ENCODE measurements at regions of chr20 and their contacts with region 1.

Region 1: GRCh38 chr20:10434832-10435812 is at the start of gene SLX4IP:
- DNase-seq: peak; percentile 89
- H3K4me3 Mint-ChIP-seq: peak within 1 kb of the TSS; percentile 90
- H3K27ac Mint-ChIP-seq: peak within 1 kb of the TSS; percentile 96
- H3K4me1 Mint-ChIP-seq: peaks cover 50% of the 10 kb centered on the region
- H3K27me3 Mint-ChIP-seq: no peaks in the 10 kb centered on the region
- total RNA-seq, gene SLX4IP: 5.5 to 6.3 TPM

Region 2: GRCh38 chr20:10034717-10035571 is 400.2 kb before region 1 on chr20 and contains the start of gene ANKEF1:
- CTCF ChIA-PET with region 1: no interaction called
- POLR2A ChIA-PET with region 1: no interaction called
- intact Hi-C with region 1: loop called (anchors 5 kb)
- DNase-seq: peak; percentile 75
- H3K4me3 Mint-ChIP-seq: peak within 1 kb of the TSS; percentile 61
- H3K27ac Mint-ChIP-seq: no peak within 1 kb of the TSS
- H3K4me1 Mint-ChIP-seq: peaks cover 3% of the 10 kb centered on the region
- H3K27me3 Mint-ChIP-seq: peaks cover 6% of the 10 kb centered on the region
- total RNA-seq, gene ANKEF1: 1.3 TPM

Region 3: GRCh38 chr20:10357974-10358373 is 77.1 kb before region 1 on chr20:
- CTCF ChIA-PET with region 1: interaction called, 3 read pairs
- POLR2A ChIA-PET with region 1: interaction called, 16 read pairs
- intact Hi-C with region 1: no loop called
- DNase-seq: no peak
- H3K4me3 Mint-ChIP-seq: no peak overlapping the region
- H3K27ac Mint-ChIP-seq: no peak overlapping the region
- H3K4me1 Mint-ChIP-seq: peaks cover 5% of the 10 kb centered on the region
- H3K27me3 Mint-ChIP-seq: no peaks in the 10 kb centered on the region

Region 4: GRCh38 chr20:10511509-10512251 is 76.6 kb after region 1 on chr20:
- CTCF ChIA-PET with region 1: no interaction called
- POLR2A ChIA-PET with region 1: no interaction called
- intact Hi-C with region 1: loop called (anchors 1 kb)
- DNase-seq: peak; percentile 87
- H3K4me3 Mint-ChIP-seq: no peak overlapping the region
- H3K27ac Mint-ChIP-seq: peak overlapping the region; percentile 66
- H3K4me1 Mint-ChIP-seq: peaks cover 24% of the 10 kb centered on the region
- H3K27me3 Mint-ChIP-seq: no peaks in the 10 kb centered on the region

Region 5: GRCh38 chr20:10673988-10674711 is 239.0 kb after region 1 on chr20 and contains the start of gene JAG1:
- CTCF ChIA-PET with region 1: no interaction called
- POLR2A ChIA-PET with region 1: no interaction called
- intact Hi-C with region 1: loop called (anchors 2 kb)
- DNase-seq: peak; percentile 77
- H3K4me3 Mint-ChIP-seq: peak within 1 kb of the TSS; percentile 79
- H3K27ac Mint-ChIP-seq: no peak within 1 kb of the TSS
- H3K4me1 Mint-ChIP-seq: peaks cover 26% of the 10 kb centered on the region
- H3K27me3 Mint-ChIP-seq: peaks cover 71% of the 10 kb centered on the region
- total RNA-seq, gene JAG1: 0.15 to 0.40 TPM

Measured in activated CD4-positive, alpha-beta memory T cell treated with anti-CD3 and anti-CD28 coated beads for 36 hours (primary cell).